Naive thymus-derived CD8-positive, alpha-beta T cell (primary cell): ENCODE measurements at regions of chr4 and their contacts with region 1.

Region 1: GRCh38 chr4:52712172-52712990 is 38.8 kb downstream of the ERVMER34-1 start:
- DNase-seq: peak; percentile 91 to 97 (median 94)
- ATAC-seq: peak; percentile 88 to 93
- H3K4me3 Mint-ChIP-seq: peak overlapping the region; percentile 81 to 95 (median 93)
- H3K27ac Mint-ChIP-seq: peak overlapping the region; percentile 88 to 98 (median 96)
- H3K4me1 Mint-ChIP-seq: peaks cover 15 to 44% (median 33%) of the 10 kb centered on the region in 4 donors
- H3K27me3 Mint-ChIP-seq: no peaks in the 10 kb centered on the region

Region 2: GRCh38 chr4:52659001-52659721 is 53.2 kb before region 1 on chr4 and contains the start of gene USP46:
- POLR2A ChIA-PET with region 1: interaction called, 13 read pairs
- DNase-seq: peak in 9 of 10 donors; percentile 14 to 56 (median 22)
- ATAC-seq: peak; percentile 63 to 86
- H3K4me3 Mint-ChIP-seq: peak within 1 kb of the TSS; percentile 75 to 91 (median 86)
- H3K27ac Mint-ChIP-seq: peak within 1 kb of the TSS in 7 of 10 donors; percentile 58 to 85 (median 65)
- H3K4me1 Mint-ChIP-seq: peaks cover 8 to 21% (median 18%) of the 10 kb centered on the region in 4 donors
- H3K27me3 Mint-ChIP-seq: peaks cover 15 to 39% (median 15%) of the 10 kb centered on the region in 5 donors
- polyA plus RNA-seq, gene USP46: 0.24 to 0.28 TPM in 2 of 3 donors, not detected in the other

Region 3: GRCh38 chr4:52694936-52695335 is 17.4 kb before region 1 on chr4:
- POLR2A ChIA-PET with region 1: no interaction called
- DNase-seq: no peak
- ATAC-seq: no peak
- H3K4me3 Mint-ChIP-seq: no peak overlapping the region
- H3K27ac Mint-ChIP-seq: no peak overlapping the region
- H3K4me1 Mint-ChIP-seq: peaks cover 0 to 4% (median 2%) of the 10 kb centered on the region in 4 donors
- H3K27me3 Mint-ChIP-seq: peaks cover 10 to 37% (median 25%) of the 10 kb centered on the region in 5 donors